HCT116 (cell line): ENCODE measurements at regions of chr9 and their contacts with region 1.

Region 1: DNA sequence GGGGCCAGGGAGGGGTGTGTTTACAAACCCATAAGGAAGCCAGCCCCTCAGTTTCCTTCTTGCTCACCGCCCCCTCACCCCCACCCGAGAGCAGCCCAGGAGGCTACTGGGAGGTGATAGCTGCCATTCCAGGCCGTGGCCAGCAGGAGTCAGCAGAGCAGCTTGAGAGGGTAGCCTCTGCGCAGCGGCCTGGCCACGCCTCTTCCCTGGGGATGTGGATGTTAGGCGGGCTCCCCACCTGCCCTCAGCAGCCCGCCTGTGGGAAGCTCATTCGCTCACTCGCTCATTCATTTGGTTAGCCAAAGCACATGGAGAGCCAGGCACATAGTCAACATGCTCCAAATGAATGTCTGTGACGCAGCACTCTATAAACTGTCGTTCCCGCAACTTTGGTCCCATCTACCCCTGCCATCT is 6.1 kb upstream of the DPM2 start:
- DNase-seq: peak; percentile 51
- ATAC-seq: peak; percentile 91
- H3K4me3 ChIP-seq: no peak overlapping the region
- H3K27ac ChIP-seq: peak overlapping the region; percentile 41
- H3K4me1 ChIP-seq: peaks cover 10 to 21% of the 10 kb centered on the region in 2 experiments
- H3K27me3 ChIP-seq: no peaks in the 10 kb centered on the region
- CTCF ChIP-seq: peak in 2 of 3 experiments; percentile 93 to 95; a peak in 4 of 6 replicates
- POLR2A ChIP-seq: no peak
- RAD21 ChIP-seq: no peak

Region 2: DNA sequence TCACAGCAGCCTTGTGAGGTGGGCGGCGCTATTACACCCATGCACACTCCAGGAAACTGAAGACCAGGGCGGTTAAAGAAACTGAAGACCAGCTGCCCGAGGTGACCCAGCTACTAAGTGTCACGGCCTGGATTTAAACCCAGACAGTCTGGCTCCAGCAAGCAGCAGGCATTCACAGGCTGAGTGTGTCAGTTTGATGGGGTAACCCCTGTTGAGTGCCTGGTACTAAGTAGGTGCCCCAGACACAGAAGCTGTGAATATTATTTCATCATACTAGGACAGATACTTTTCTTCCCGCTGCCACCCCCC is 96.6 kb before region 1 on chr9:
- CTCF ChIA-PET with region 1: no interaction called
- POLR2A ChIA-PET with region 1: no interaction called
- RAD21 ChIA-PET with region 1: no interaction called
- intact Hi-C with region 1: no loop called
- DNase-seq: no peak
- ATAC-seq: no peak
- H3K4me3 ChIP-seq: no peak overlapping the region
- H3K27ac ChIP-seq: no peak overlapping the region
- H3K4me1 ChIP-seq: no peaks in the 10 kb centered on the region
- H3K27me3 ChIP-seq: no peaks in the 10 kb centered on the region
- CTCF ChIP-seq: no peak
- POLR2A ChIP-seq: no peak
- RAD21 ChIP-seq: no peak

Region 3: GRCh38 chr9:127930231-127931091 is 13.3 kb before region 1 on chr9 and contains the start of gene PIP5KL1:
- CTCF ChIA-PET with region 1: interaction called, 14 read pairs
- POLR2A ChIA-PET with region 1: interaction called, 3 read pairs
- RAD21 ChIA-PET with region 1: no interaction called
- intact Hi-C with region 1: no loop called
- DNase-seq: peak; percentile 52
- ATAC-seq: peak; percentile 68
- H3K4me3 ChIP-seq: peak within 1 kb of the TSS; percentile 29 to 55
- H3K27ac ChIP-seq: peak within 1 kb of the TSS; percentile 84
- H3K4me1 ChIP-seq: peaks cover 52 to 89% of the 10 kb centered on the region in 2 experiments
- H3K27me3 ChIP-seq: no peaks in the 10 kb centered on the region
- CTCF ChIP-seq: peak in 1 of 3 experiments; percentile 8; a peak in 1 of 6 replicates
- POLR2A ChIP-seq: no peak
- RAD21 ChIP-seq: no peak
- total RNA-seq, gene PIP5KL1: 37.6 TPM

Region 4: GRCh38 chr9:127955294-127956035 is 11.7 kb after region 1 on chr9:
- CTCF ChIA-PET with region 1: interaction called, 37 read pairs
- POLR2A ChIA-PET with region 1: no interaction called
- RAD21 ChIA-PET with region 1: no interaction called
- intact Hi-C with region 1: no loop called
- DNase-seq: peak; percentile 98
- ATAC-seq: peak; percentile 93
- H3K4me3 ChIP-seq: peak overlapping the region; percentile 26 to 49
- H3K27ac ChIP-seq: peak overlapping the region; percentile 79
- H3K4me1 ChIP-seq: peaks cover 61 to 79% of the 10 kb centered on the region in 2 experiments
- H3K27me3 ChIP-seq: no peaks in the 10 kb centered on the region
- CTCF ChIP-seq: peak in 2 of 3 experiments; percentile 45 to 57; a peak in 4 of 6 replicates
- POLR2A ChIP-seq: no peak
- RAD21 ChIP-seq: no peak

Region 5: DNA sequence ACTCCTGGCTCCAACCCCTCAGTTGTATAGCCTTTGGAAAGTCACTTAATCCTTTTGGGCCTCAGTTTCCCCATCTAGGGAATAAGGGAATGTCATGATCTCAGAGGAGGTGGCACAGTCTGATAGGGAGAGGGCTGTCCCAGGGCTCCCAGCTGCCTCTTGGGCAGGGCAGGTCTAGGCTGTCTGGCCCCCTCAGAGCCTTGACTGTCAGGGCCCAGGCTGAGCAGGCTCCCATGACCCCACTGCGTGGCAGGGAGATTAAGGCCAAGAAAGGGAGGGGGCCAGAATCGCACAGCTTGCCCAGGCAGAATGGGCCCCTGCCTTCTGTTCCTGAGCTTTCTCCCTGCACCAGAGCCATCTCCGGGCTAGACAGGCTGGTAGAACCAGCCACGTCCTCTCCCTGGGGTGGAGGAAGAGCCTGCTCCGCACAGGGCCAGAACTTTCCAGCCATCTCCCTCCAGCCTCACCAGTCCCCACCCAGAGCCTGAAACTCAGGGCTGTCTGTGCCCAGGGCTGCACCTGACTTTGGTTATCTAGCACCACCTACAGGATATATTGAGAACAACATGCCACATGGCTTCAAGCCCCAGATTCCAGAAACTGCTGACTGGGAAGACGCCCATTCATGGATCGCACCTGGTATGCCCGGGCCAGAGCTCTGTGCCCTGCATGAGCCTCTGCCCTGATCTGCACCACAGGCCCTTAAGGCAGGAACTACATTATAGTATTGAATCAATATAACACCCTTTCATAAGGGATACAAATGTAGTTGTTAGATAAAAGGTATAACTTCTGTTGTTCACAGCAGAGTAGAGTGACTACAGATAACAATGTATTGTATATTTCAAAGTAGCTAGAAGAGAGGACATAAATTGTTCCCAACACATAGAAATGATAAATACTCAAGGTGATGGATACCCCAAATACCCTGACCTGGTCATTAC is 91.4 kb after region 1 on chr9:
- CTCF ChIA-PET with region 1: interaction called, 40 read pairs
- POLR2A ChIA-PET with region 1: interaction called, 3 read pairs
- RAD21 ChIA-PET with region 1: interaction called, 10 to 11 read pairs
- intact Hi-C with region 1: loop called (anchors 1 kb)
- DNase-seq: peak; percentile 85
- ATAC-seq: peak; percentile 92
- H3K4me3 ChIP-seq: no peak overlapping the region
- H3K27ac ChIP-seq: no peak overlapping the region
- H3K4me1 ChIP-seq: peaks cover 0 to 30% of the 10 kb centered on the region in 2 experiments; a peak in 2 of 4 replicates
- H3K27me3 ChIP-seq: no peaks in the 10 kb centered on the region
- CTCF ChIP-seq: peak; percentile 72 to 96 (median 87)
- POLR2A ChIP-seq: no peak
- RAD21 ChIP-seq: peak; percentile 99

Region 6: DNA sequence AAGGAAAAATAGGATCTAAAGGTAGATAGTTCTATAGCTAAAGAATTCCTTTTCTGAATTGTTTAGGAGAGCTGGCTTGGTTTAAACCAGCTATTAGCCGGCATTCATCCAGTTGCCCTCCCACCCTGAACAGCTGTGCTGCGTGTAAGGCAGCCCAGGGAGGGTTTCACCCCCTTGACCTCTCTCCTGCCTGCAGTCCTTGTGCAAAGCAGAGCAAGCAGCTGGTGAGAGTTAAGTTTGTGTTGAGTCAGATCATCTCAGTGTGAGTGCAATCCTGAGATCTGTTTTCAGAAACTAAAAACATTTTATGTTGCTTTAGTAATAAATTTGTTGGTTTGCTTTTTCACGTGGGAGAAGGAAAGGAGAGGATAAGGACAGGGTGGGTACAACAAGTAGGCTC is 137.3 kb after region 1 on chr9:
- CTCF ChIA-PET with region 1: interaction called, 9 read pairs
- POLR2A ChIA-PET with region 1: no interaction called
- RAD21 ChIA-PET with region 1: no interaction called
- intact Hi-C with region 1: loop called (anchors 2 kb)
- DNase-seq: no peak
- ATAC-seq: no peak
- H3K4me3 ChIP-seq: no peak overlapping the region
- H3K27ac ChIP-seq: 0 out of 2 replicates have a peak overlapping the region, but pooled peaks have one; percentile 6
- H3K4me1 ChIP-seq: peaks cover 63 to 73% of the 10 kb centered on the region in 2 experiments
- H3K27me3 ChIP-seq: no peaks in the 10 kb centered on the region
- CTCF ChIP-seq: no peak
- POLR2A ChIP-seq: no peak
- RAD21 ChIP-seq: no peak

Region 7: GRCh38 chr9:128117613-128118471 is 174.1 kb after region 1 on chr9:
- CTCF ChIA-PET with region 1: interaction called, 7 read pairs
- POLR2A ChIA-PET with region 1: no interaction called
- RAD21 ChIA-PET with region 1: no interaction called
- intact Hi-C with region 1: loop called (anchors 1 kb)
- DNase-seq: peak; percentile 74
- ATAC-seq: peak; percentile 85
- H3K4me3 ChIP-seq: no peak overlapping the region
- H3K27ac ChIP-seq: no peak overlapping the region
- H3K4me1 ChIP-seq: peaks cover 3 to 4% of the 10 kb centered on the region in 2 experiments; a peak in 3 of 4 replicates
- H3K27me3 ChIP-seq: no peaks in the 10 kb centered on the region
- CTCF ChIP-seq: peak in 2 of 3 experiments; percentile 100; a peak in 4 of 6 replicates
- POLR2A ChIP-seq: no peak
- RAD21 ChIP-seq: no peak